ENCODE measurements at regions of chr1 and their contacts with region 1.

Region 1: DNA sequence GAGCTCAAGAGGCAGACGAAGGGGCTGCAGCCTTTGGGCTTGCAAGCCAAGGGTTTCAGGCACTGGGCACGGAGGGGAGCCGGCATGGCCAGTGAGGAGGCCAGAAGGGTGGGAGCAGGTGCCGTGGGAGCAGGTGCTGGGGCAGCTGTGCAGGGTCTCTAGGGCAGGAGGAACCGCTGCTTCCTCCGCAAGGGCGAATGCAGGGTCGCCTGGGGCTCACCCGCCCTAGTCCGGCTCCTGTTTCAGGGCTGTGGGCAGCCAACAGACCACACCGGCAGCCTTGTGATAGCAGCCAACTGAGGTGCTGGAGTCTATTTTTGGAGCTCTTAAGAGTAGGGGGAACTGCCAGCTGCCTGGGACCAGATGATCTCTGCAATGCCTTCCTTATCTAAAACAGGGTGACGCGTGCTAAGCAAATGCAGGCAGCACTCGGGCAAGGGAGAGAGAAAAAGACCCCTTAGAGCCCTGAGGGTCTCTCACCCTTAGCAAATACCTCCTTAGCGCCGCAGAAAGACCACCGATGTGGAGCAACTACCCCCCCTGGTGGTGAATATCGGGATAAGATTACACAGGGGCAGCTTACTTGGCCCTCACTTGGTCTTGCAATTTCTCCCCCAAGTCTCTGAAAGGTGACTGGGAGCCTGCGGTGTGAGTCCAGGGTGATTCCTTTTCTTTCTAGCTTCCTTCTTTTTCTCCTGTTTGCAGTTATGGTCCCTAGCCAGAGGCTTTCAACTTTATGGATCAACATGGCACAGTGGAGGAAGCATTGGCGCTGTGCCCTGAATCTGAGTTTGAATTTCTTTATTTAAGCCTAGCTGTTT is 20.7 kb upstream of the MAPKAPK2 start:
- DNase-seq: peak; percentile 84
- H3K4me3 ChIP-seq: peak overlapping the region; percentile 8 to 39; a peak in 2 of 4 replicates
- H3K27ac ChIP-seq: no peak overlapping the region
- H3K4me1 ChIP-seq: peaks cover 0 to 6% of the 10 kb centered on the region in 2 experiments; a peak in 1 of 4 replicates
- H3K27me3 ChIP-seq: peaks cover 23% of the 10 kb centered on the region; the same call in 1 of the 2 replicates
- CTCF ChIP-seq: peak; percentile 89
- EP300 ChIP-seq: no peak
- RAD21 ChIP-seq: peak; percentile 89

Region 2: DNA sequence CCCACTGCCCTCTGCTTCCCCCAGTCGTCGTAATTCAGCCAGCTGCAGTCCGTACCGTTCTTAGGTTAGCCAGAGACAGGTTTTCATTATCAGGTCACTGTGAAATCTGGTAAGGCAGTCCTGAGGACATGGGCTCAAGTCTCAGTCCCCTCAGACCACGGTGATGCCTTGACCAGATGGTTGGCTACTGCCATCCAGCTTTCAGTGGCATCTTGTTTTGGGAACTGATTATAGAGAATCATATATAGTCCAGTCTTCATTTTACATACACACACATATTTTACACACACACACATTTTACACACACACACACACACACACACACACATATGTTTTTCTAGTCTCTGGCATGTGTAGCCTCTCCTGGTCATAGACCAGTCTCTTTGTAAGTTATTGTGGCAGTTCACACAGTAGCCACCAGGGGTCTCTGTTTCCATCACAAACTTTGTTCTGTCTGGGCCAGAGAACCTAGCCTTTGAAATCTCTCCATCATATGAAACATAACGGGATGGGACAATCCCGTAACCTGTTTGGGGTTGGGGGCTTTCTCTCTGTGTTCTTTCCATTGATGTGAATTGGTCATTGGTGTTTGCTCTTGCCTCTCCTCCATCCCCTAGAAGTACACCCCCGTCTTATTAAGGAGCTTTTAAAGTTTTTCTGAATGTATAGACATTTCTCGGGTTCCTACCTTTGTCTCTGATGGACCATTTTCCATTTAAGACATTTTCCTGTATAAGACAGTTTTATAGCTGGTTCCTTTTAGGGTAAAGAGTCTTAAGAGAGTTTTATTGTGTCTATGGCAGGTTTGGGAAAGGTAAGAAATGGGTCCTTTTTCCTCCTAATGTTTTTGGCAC is 202.2 kb before region 1 on chr1:
- CTCF ChIA-PET with region 1: interaction called, 11 read pairs
- POLR2A ChIA-PET with region 1: no interaction called
- DNase-seq: peak; percentile 76
- H3K4me3 ChIP-seq: no peak overlapping the region; a peak in 1 of 4 replicates
- H3K27ac ChIP-seq: no peak overlapping the region
- H3K4me1 ChIP-seq: peaks cover 13 to 19% of the 10 kb centered on the region in 2 experiments
- H3K27me3 ChIP-seq: no peaks in the 10 kb centered on the region
- CTCF ChIP-seq: peak; percentile 89
- EP300 ChIP-seq: no peak
- RAD21 ChIP-seq: peak; percentile 72

Region 3: GRCh38 chr1:206583707-206584648 is 80.1 kb before region 1 on chr1:
- CTCF ChIA-PET with region 1: interaction called, 11 read pairs
- POLR2A ChIA-PET with region 1: no interaction called
- DNase-seq: peak; percentile 84
- H3K4me3 ChIP-seq: peak overlapping the region in 1 of 2 experiments; percentile 17; a peak in 1 of 4 replicates
- H3K27ac ChIP-seq: no peak overlapping the region
- H3K4me1 ChIP-seq: peaks cover 8 to 9% of the 10 kb centered on the region in 2 experiments; a peak in 3 of 4 replicates
- H3K27me3 ChIP-seq: no peaks in the 10 kb centered on the region
- CTCF ChIP-seq: peak; percentile 93
- EP300 ChIP-seq: no peak
- RAD21 ChIP-seq: peak; percentile 85

Region 4: DNA sequence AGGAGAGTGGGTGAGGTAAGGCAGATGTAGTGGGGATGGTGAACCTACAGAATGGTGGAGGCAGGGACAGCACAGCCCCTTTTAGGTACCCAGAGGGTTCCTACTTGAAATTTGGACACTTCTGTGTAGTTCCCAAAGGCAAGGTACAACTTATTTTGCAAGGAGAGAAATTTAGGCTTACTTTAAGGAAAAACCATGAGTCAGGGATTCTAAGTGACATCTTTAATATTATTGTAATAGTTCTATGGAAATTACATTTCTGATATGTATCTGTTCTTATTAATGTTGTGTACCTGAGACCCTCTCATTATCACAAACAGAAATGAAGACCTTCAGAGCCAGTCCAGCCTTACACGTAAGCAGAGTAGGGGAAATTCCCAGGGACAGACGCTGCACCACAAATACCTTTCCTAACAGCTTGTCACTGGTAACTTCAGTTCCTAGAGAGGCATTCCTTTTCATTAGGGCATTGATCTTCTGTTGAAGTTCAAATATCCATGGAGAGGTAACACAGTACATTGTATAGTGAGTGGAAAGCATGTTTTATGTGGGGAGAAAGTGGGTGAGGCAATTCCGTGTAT is 20.8 kb before region 1 on chr1:
- CTCF ChIA-PET with region 1: interaction called, 450 read pairs
- POLR2A ChIA-PET with region 1: no interaction called
- DNase-seq: no peak
- H3K4me3 ChIP-seq: no peak overlapping the region
- H3K27ac ChIP-seq: no peak overlapping the region
- H3K4me1 ChIP-seq: peaks cover 0 to 8% of the 10 kb centered on the region in 2 experiments; a peak in 1 of 4 replicates
- H3K27me3 ChIP-seq: no peaks in the 10 kb centered on the region
- CTCF ChIP-seq: no peak
- EP300 ChIP-seq: no peak
- RAD21 ChIP-seq: no peak

Region 5: DNA sequence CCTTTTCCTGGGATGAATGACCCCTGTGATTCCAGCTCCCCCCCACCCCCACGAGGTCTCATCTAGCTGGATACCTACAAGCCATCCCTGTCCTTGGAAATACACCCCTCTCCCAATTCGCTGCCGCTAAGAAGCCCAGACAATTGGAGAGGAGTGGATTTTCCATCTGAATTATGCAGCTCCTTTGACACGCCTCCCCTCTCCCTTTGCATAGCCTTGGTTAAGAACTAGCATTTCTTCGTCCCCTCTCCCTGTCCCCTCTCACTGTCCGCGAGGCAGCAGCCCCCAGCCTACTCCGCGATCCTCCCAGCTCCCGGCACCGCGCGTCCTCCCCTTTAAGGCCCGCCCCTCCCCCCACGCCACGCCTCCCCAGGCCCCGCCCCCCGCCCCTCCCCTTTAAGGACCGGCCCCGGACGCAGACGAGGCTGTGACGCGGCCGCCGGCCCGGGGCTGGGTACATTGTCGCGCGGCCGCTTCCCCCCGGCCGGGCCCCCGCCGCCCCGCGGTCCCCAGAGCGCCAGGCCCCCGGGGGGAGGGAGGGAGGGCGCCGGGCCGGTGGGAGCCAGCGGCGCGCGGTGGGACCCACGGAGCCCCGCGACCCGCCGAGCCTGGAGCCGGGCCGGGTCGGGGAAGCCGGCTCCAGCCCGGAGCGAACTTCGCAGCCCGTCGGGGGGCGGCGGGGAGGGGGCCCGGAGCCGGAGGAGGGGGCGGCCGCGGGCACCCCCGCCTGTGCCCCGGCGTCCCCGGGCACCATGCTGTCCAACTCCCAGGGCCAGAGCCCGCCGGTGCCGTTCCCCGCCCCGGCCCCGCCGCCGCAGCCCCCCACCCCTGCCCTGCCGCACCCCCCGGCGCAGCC is 20.7 kb after region 1 on chr1 and contains the start of gene MAPKAPK2:
- CTCF ChIA-PET with region 1: interaction called, 25 read pairs
- POLR2A ChIA-PET with region 1: no interaction called
- DNase-seq: peak; percentile 99
- H3K4me3 ChIP-seq: peak within 1 kb of the TSS; percentile 87 to 90
- H3K27ac ChIP-seq: peak within 1 kb of the TSS; percentile 74 to 93
- H3K4me1 ChIP-seq: peaks cover 28 to 33% of the 10 kb centered on the region in 2 experiments
- H3K27me3 ChIP-seq: peaks cover 4% of the 10 kb centered on the region; the same call in 1 of the 2 replicates
- CTCF ChIP-seq: no peak
- EP300 ChIP-seq: no peak
- RAD21 ChIP-seq: no peak
- polyA plus RNA-seq, gene MAPKAPK2: 45.9 and 46.8 TPM in 2 replicates

Region 6: GRCh38 chr1:206982216-206982615 is 318.2 kb after region 1 on chr1:
- CTCF ChIA-PET with region 1: interaction called, 17 read pairs
- POLR2A ChIA-PET with region 1: no interaction called
- DNase-seq: peak; percentile 58
- H3K4me3 ChIP-seq: no peak overlapping the region
- H3K27ac ChIP-seq: no peak overlapping the region
- H3K4me1 ChIP-seq: no peaks in the 10 kb centered on the region
- H3K27me3 ChIP-seq: peaks cover 46% of the 10 kb centered on the region; the same call in 1 of the 2 replicates
- CTCF ChIP-seq: peak; percentile 62
- EP300 ChIP-seq: no peak
- RAD21 ChIP-seq: peak; percentile 85

Measured in SK-N-SH (cell line).